Activated T-helper 2 cell treated with anti-CD3 and anti-CD28 coated beads, Interferon-gamma antibody, Interleukin-2, Interleukin-4, amounts not matched to agents 10 μg/mL and 5 μg/mL and 100 μg/mL, durations not matched to agents 14 hours and 24 hours and 36 hours (primary cell): ENCODE measurements at regions of chr9 and their contacts with region 1.

Region 1: DNA sequence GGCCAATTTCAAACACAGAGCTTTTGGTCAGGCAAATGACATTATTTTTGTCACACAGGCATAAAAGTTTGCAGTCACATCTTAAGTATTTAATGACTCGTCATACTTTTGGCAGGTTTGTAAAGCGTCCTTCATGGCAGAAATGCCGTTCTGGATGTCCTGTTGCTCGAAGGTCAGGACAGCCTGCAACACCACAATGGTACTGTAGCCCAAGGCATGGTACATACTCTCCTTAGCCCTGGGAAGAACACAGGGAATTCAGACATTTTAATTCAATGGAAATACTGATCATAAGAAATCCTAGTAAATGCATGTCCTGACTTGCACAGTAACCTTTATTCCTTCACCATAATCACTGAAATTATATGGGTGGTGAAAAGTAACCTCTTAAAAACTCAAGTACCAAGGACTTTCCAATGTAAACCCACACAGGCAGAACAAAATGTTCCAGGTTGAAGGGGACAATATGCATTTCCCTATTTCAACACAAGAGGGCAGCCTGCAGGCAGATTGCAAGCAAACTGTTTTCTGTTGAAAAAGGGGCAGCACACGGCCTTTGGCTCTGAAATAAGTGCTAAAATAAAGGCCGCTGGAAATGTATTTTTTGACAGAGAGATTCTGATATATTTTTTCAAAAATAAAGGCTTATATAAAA is 95.7 kb downstream of the TTC39B start:
- DNase-seq: peak; percentile 33
- H3K4me3 Mint-ChIP-seq: no peak overlapping the region
- H3K27ac Mint-ChIP-seq: no peak overlapping the region
- H3K4me1 Mint-ChIP-seq: peaks cover 11% of the 10 kb centered on the region
- H3K27me3 Mint-ChIP-seq: no peaks in the 10 kb centered on the region

Region 2: DNA sequence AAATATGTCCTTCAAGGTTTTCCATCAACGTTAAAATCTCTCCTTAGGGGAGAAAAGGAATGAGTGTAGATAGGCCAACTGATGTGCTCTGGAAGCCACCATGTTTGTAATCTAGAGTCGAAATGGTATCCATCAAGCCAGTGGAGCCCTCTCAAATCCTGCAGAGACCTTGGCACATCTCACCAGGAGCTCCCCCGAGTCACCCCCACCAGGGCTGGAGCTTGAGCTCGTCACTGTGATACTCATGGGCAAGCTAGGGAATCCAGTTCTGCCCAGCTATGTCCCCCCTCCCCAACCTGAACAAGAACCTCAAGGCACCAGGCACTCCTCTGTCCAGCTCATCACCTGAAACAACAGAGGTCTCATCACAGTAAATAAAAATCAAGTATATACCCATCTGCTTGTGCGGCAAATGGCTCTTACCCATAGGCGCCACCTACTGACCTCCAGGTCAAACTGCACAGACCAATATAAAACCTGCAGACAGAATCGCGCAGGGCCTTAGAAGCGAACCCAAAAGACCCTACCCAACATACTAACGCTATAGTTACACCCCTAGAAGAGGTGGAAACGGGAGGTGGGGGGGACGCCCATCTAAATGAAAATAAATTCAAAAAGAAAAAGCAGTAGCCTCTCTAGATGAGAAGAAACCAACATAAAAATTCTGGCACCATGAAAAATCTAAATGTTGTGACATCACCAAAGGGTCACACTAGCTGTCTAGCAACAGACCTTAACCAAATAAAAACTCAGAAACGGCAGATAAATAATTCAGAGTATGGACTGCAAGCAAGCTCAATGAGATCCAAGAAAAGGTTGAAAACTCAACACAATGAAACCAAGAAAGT is 20.7 kb after region 1 on chr9:
- intact Hi-C with region 1: loop called (anchors 1 kb)
- DNase-seq: no peak
- H3K4me3 Mint-ChIP-seq: no peak overlapping the region
- H3K27ac Mint-ChIP-seq: no peak overlapping the region
- H3K4me1 Mint-ChIP-seq: peaks cover 25% of the 10 kb centered on the region
- H3K27me3 Mint-ChIP-seq: no peaks in the 10 kb centered on the region

Region 3: DNA sequence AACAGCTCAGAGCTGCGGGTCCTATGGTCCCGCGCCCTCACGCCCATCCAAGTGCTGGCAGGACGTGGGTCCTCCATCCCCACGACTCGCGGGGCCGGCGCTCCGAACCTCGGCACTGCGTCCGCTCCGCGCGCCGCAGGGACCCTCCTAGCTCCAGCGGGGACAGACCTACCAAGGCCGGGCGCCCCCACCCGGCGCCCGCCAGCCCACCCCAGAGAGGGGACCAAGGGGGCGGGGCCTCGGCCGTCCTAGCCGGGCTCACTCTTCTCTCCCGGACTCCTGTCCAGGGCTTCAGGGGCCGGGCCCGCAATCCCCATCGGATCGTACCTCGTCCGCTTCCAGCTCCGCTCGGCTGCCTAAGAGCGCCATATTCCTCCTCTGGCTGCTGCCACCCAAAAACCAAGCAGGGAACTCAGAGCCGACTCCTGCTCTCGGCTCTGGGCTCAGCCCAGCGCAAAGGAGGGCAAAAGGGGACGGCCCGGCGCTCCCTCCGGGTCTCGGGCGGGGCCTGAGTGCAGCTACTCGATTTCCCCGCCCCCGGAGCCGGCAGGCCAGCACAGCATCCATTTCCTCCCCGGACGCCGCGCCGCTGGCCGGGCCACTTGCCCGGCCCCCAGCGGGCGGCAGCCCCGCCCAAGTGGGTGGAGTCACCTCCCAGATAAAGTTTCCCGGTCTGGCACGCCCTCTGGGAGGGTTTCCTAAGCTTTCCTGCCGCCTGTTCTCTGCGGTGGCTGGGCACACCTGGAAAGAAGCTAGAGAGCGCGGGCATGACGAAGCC is 95.7 kb after region 1 on chr9 and contains the start of gene TTC39B:
- intact Hi-C with region 1: loop called (anchors 5 kb)
- DNase-seq: peak; percentile 79
- H3K4me3 Mint-ChIP-seq: peak within 1 kb of the TSS; percentile 98
- H3K27ac Mint-ChIP-seq: peak within 1 kb of the TSS; percentile 94
- H3K4me1 Mint-ChIP-seq: peaks cover 49% of the 10 kb centered on the region
- H3K27me3 Mint-ChIP-seq: no peaks in the 10 kb centered on the region
- total RNA-seq, gene TTC39B: 8.9 and 10.5 TPM in 2 replicates

Region 4: GRCh38 chr9:15416880-15417279 is 205.6 kb after region 1 on chr9:
- intact Hi-C with region 1: loop called (anchors 1 kb)
- DNase-seq: no peak
- H3K4me3 Mint-ChIP-seq: no peak overlapping the region
- H3K27ac Mint-ChIP-seq: no peak overlapping the region
- H3K4me1 Mint-ChIP-seq: peaks cover 11% of the 10 kb centered on the region
- H3K27me3 Mint-ChIP-seq: peaks cover 18% of the 10 kb centered on the region

Region 5: DNA sequence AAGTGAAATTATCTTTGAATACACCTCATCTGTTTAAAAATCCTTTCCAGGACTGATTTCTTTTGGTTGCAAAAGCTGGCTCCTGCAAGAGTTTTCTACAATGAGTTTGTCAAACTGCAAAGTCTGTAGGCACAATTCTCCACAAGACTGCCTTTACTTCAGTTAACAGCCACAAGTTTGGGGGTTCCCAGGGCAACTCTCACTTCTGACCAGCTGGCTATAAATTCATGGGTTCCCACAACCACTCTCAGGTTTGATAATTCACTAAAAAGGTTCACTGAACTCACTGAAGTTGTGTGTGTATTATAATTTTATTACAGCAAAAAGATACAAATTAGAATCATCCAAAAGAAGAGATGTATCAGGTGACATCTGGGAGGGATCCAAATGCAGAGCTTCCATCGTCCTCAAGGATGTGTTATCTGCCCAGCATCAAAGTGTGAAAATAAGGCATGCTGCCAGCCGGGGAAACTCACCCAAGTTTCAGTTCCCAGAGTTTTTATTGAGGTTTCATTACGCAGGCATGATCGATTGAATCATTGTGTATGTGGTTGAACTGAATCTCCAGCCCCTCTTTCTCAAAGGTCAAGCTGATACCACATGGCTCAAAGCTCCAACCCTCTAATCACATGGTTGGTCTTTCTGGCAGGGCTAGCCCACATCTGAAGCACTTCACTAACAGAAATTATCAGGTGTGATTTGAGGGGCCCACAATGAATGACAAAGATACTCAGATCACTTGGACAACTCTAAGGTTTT is 318.5 kb after region 1 on chr9:
- intact Hi-C with region 1: loop called (anchors 5 kb)
- DNase-seq: no peak
- H3K4me3 Mint-ChIP-seq: no peak overlapping the region
- H3K27ac Mint-ChIP-seq: no peak overlapping the region
- H3K4me1 Mint-ChIP-seq: peaks cover 10% of the 10 kb centered on the region
- H3K27me3 Mint-ChIP-seq: peaks cover 5% of the 10 kb centered on the region